OCI-LY7 (cell line): ENCODE measurements at regions of chr3 and their contacts with region 1.

Region 1: GRCh38 chr3:169764452-169765274 is at the start of gene TERC:
- DNase-seq: peak; percentile 88
- H3K4me3 ChIP-seq: peak within 1 kb of the TSS; percentile 70
- H3K27ac ChIP-seq: peak within 1 kb of the TSS; percentile 28
- H3K4me1 ChIP-seq: peaks cover 21% of the 10 kb centered on the region
- CTCF ChIP-seq: no peak
- total RNA-seq, gene TERC: 143 and 210 TPM in 2 replicates

Region 2: GRCh38 chr3:169812332-169813235 is 47.9 kb after region 1 on chr3 and contains the starts of genes LRRC34 and LRRIQ4:
- CTCF ChIA-PET with region 1: no interaction called
- POLR2A ChIA-PET with region 1: interaction called, 4 read pairs
- intact Hi-C with region 1: loop called (anchors 2 kb)
- DNase-seq: peak; percentile 83
- H3K4me3 ChIP-seq: peak within 1 kb of the TSS; percentile 62
- H3K27ac ChIP-seq: peak within 1 kb of the TSS; percentile 22
- H3K4me1 ChIP-seq: peaks cover 41% of the 10 kb centered on the region
- CTCF ChIP-seq: no peak
- total RNA-seq, gene LRRC34: 2.2 and 2.8 TPM in 2 replicates
- total RNA-seq, gene LRRIQ4: 0.08 and 0.47 TPM in 2 replicates

Region 3: DNA sequence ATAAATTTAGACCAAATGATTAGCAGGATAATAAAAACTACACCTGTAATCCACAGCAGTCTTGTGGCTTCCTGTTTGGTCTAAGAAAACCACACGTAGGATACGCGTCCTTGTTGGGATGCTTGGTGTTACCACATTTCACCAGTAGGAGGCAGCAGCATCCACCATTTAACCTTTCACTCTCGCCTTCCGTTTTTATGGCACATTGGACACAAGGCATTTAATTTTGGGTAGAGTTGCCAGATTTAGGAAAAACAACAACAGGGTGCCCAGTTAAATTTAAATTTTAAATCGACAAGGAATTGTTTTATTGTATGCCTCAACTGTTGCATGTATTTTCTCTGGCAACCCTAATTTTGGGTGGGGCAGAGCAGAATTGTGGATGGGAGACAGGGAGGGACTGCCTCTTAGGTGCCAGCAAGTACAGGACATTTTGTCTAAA is 98.8 kb after region 1 on chr3:
- CTCF ChIA-PET with region 1: no interaction called
- POLR2A ChIA-PET with region 1: no interaction called
- intact Hi-C with region 1: loop called (anchors 5 kb)
- DNase-seq: peak; percentile 85
- H3K4me3 ChIP-seq: no peak overlapping the region
- H3K27ac ChIP-seq: no peak overlapping the region
- H3K4me1 ChIP-seq: peaks cover 33% of the 10 kb centered on the region
- CTCF ChIP-seq: peak; percentile 99

Region 4: DNA sequence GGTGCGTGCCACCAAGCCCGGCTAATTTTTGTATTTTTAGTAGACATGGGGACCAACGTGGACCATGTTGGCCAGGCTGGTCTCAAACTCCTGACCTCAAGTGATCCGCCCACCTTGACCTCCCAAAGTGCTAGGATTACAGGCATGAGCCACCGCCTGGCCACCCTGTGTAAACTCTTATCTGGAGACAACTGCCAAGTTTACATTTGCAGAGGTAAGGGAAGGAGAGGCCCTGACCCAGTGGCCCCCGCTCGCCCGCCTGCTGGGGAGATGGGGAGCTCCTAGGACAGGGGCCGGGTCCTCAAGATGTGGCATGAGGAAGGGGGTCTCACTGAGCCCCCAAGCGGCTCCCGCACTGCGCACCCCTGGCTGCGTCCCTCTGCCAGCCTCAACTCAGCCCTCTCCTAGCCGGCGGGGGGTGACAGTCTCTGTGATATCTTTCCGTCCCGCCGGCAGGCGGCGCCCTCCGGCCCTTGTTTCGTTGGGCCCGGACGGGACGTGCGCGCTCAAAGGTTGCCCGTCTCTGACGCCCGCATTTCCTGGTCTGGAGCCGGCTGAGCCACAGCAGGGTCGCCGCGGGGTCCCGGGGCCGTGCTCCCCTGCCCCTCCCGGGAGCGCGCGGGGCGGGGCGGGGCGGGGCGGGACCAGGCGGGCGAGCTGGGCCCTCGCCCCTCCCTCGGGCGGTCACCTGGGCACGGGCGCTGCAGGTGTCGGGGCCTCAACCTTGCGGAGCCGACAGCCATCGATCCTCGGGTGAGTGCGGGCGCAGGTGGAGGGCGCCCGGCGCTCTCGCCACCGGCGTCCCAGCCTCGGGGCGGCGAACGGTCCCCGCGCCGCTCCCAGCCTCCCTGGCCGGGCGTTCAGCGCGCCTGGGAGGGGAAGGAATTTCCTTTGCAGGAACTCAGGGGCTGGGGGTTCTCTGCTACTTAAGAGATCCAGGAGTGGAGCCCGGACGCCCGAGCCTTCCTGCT is 273.1 kb after region 1 on chr3 and contains the start of gene GPR160:
- CTCF ChIA-PET with region 1: no interaction called
- POLR2A ChIA-PET with region 1: no interaction called
- intact Hi-C with region 1: loop called (anchors 1 kb)
- DNase-seq: peak; percentile 95
- H3K4me3 ChIP-seq: peak within 1 kb of the TSS; percentile 94
- H3K27ac ChIP-seq: peak within 1 kb of the TSS; percentile 64
- H3K4me1 ChIP-seq: peaks cover 40% of the 10 kb centered on the region
- CTCF ChIP-seq: peak; percentile 81
- total RNA-seq, gene GPR160: 90.5 and 108 TPM in 2 replicates

Region 5: GRCh38 chr3:170180908-170181879 is 416.5 kb after region 1 on chr3 and contains the start of gene PHC3:
- CTCF ChIA-PET with region 1: no interaction called
- POLR2A ChIA-PET with region 1: interaction called, 8 read pairs
- intact Hi-C with region 1: loop called (anchors 5 kb)
- DNase-seq: peak; percentile 94
- H3K4me3 ChIP-seq: peak within 1 kb of the TSS; percentile 79
- H3K27ac ChIP-seq: peak within 1 kb of the TSS; percentile 65
- H3K4me1 ChIP-seq: peaks cover 23% of the 10 kb centered on the region
- CTCF ChIP-seq: peak; percentile 51; the same call in 1 of the 2 replicates
- total RNA-seq, gene PHC3: 36.1 and 40.6 TPM in 2 replicates

Region 6: DNA sequence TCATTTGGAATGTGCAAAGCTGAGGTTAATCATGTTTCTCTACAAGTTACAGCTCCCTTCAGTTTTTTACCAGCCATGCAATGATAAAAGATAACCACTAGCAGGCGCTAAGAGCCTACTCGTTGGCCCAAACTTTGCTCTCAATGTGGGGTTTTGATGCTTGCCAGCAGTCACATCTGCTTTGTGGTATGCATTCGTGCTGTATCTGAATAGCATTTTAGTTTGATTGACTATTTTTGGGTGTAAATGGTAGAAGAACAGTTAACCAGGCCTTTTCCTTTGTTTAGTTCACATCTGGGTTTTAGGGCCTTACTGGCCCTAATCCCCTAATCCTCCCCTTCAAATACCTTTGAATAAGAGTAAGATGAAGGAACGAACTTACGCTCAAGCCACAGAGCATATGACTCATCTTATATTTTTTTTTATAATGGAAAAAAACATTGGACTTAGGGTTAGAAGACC is 649.6 kb after region 1 on chr3:
- CTCF ChIA-PET with region 1: no interaction called
- POLR2A ChIA-PET with region 1: no interaction called
- intact Hi-C with region 1: loop called (anchors 2 kb)
- DNase-seq: peak; percentile 73
- H3K4me3 ChIP-seq: no peak overlapping the region
- H3K27ac ChIP-seq: no peak overlapping the region
- H3K4me1 ChIP-seq: no peaks in the 10 kb centered on the region
- CTCF ChIP-seq: peak; percentile 99